ENCODE measurements at regions of chr9 and their contacts with region 1.

Region 1: GRCh38 chr9:92877531-92878430 is at the start of gene ZNF484:
- DNase-seq: peak; percentile 98
- H3K4me3 Mint-ChIP-seq: peak within 1 kb of the TSS; percentile 97
- H3K27ac Mint-ChIP-seq: peak within 1 kb of the TSS; percentile 97
- H3K4me1 Mint-ChIP-seq: peaks cover 41% of the 10 kb centered on the region
- H3K27me3 Mint-ChIP-seq: no peaks in the 10 kb centered on the region
- total RNA-seq, gene ZNF484: 7.4 to 7.5 TPM

Region 2: GRCh38 chr9:92808726-92809451 is 68.9 kb before region 1 on chr9:
- CTCF ChIA-PET with region 1: interaction called, 6 read pairs
- POLR2A ChIA-PET with region 1: no interaction called
- intact Hi-C with region 1: loop called (anchors 10 kb)
- DNase-seq: peak; percentile 76
- H3K4me3 Mint-ChIP-seq: peak overlapping the region; percentile 77
- H3K27ac Mint-ChIP-seq: no peak overlapping the region
- H3K4me1 Mint-ChIP-seq: peaks cover 15% of the 10 kb centered on the region
- H3K27me3 Mint-ChIP-seq: peaks cover 53% of the 10 kb centered on the region

Region 3: GRCh38 chr9:92954049-92954861 is 76.5 kb after region 1 on chr9:
- CTCF ChIA-PET with region 1: no interaction called
- POLR2A ChIA-PET with region 1: interaction called, 3 read pairs
- intact Hi-C with region 1: loop called (anchors 5 kb)
- DNase-seq: peak; percentile 94
- H3K4me3 Mint-ChIP-seq: peak overlapping the region; percentile 64
- H3K27ac Mint-ChIP-seq: peak overlapping the region; percentile 96
- H3K4me1 Mint-ChIP-seq: peaks cover 74% of the 10 kb centered on the region
- H3K27me3 Mint-ChIP-seq: no peaks in the 10 kb centered on the region

Region 4: GRCh38 chr9:92970467-92970923 is 92.7 kb after region 1 on chr9:
- CTCF ChIA-PET with region 1: no interaction called
- POLR2A ChIA-PET with region 1: no interaction called
- intact Hi-C with region 1: no loop called
- DNase-seq: peak; percentile 37
- H3K4me3 Mint-ChIP-seq: peak overlapping the region; percentile 29
- H3K27ac Mint-ChIP-seq: peak overlapping the region; percentile 100
- H3K4me1 Mint-ChIP-seq: peaks cover 87% of the 10 kb centered on the region
- H3K27me3 Mint-ChIP-seq: no peaks in the 10 kb centered on the region

Region 5: GRCh38 chr9:93143830-93144530 is 266.2 kb after region 1 on chr9:
- CTCF ChIA-PET with region 1: no interaction called
- POLR2A ChIA-PET with region 1: no interaction called
- intact Hi-C with region 1: loop called (anchors 10 kb)
- DNase-seq: peak; percentile 63
- H3K4me3 Mint-ChIP-seq: no peak overlapping the region
- H3K27ac Mint-ChIP-seq: peak overlapping the region; percentile 82
- H3K4me1 Mint-ChIP-seq: peaks cover 59% of the 10 kb centered on the region
- H3K27me3 Mint-ChIP-seq: no peaks in the 10 kb centered on the region